Heart left ventricle (tissue), 16 donors: ENCODE measurements at regions of chr3 and their contacts with region 1.

Region 1: GRCh38 chr3:109532257-109533216 is 195.2 kb upstream of the DPPA4 start:
- DNase-seq: no peak
- ATAC-seq: peak in 1 of 4 donors; percentile 55
- H3K4me3 ChIP-seq: no peak overlapping the region
- H3K27ac ChIP-seq: no peak overlapping the region
- H3K4me1 ChIP-seq: no peaks in the 10 kb centered on the region
- H3K27me3 ChIP-seq: no peaks in the 10 kb centered on the region
- CTCF ChIP-seq: peak in 7 of 12 donors; percentile 10 to 38 (median 28)
- POLR2A ChIP-seq: no peak

Region 2: DNA sequence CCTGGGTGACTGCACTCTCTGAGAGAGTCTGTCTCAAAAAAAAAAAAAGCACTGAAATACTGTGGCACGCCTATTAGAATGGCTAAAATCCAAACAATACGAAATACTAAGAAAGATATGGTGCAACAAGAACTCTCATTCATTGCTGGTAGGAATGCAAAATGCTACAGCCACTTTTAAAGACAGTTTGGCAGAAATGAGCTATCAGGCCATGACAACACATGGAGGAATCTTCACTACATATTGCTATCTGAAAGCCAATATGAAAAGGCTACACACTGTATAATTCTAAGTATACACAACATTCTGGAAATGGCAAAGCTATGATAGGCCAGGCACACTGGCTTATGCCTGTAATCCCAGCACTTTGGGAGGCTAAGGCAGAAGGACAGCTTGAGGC is 235.0 kb before region 1 on chr3:
- intact Hi-C with region 1: no loop called
- DNase-seq: no peak
- ATAC-seq: no peak
- H3K4me3 ChIP-seq: no peak overlapping the region
- H3K27ac ChIP-seq: no peak overlapping the region
- H3K4me1 ChIP-seq: no peaks in the 10 kb centered on the region
- H3K27me3 ChIP-seq: no peaks in the 10 kb centered on the region
- CTCF ChIP-seq: no peak
- POLR2A ChIP-seq: no peak

Region 3: DNA sequence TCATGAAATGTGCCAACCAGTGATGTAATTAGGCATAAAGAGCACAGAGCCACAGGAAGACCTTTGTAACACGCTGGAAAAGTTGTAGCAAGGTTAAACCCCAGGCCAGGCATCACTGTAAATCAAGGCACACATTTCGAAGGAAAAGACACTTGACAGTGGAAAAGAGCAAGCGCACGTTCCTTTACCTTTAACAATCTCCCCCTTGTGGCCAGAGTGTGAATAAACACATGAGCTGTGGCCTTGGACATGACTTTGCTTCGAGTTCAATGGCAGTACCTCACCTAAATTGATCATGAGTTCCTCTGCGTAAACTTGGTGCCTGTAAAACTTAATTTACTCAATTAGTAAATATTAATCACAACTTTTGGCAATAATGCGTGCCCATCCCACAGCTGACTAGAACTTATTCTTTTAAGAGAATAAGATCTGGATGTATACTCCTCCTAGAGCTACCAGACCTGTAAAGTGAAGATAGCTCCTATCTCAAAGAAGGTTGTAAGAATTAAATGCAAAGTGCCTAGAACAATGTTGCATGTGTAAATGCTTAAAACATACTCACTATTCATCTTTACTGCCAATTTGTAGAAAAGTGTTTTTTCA is 782.1 kb after region 1 on chr3:
- intact Hi-C with region 1: loop called in 1 of 10 experiments (anchors 5 kb)
- DNase-seq: peak in 3 of 5 donors; percentile 20 to 37 (median 29)
- ATAC-seq: peak in 3 of 4 donors; percentile 53 to 65 (median 53)
- H3K4me3 ChIP-seq: no peak overlapping the region
- H3K27ac ChIP-seq: no peak overlapping the region
- H3K4me1 ChIP-seq: peaks cover 0 to 3% (median 0%) of the 10 kb centered on the region in 12 donors
- H3K27me3 ChIP-seq: peaks cover 0 to 3% (median 0%) of the 10 kb centered on the region in 9 donors
- CTCF ChIP-seq: peak; percentile 56 to 79 (median 71)
- POLR2A ChIP-seq: no peak